Activated naive CD8-positive, alpha-beta T cell treated with anti-CD3 and anti-CD28 coated beads, Interleukin-2, amount 10 ng/mL, durations not matched to agents 7 days and 5 days (primary cell): ENCODE measurements at regions of chr15 and their contacts with region 1.

Region 1: DNA sequence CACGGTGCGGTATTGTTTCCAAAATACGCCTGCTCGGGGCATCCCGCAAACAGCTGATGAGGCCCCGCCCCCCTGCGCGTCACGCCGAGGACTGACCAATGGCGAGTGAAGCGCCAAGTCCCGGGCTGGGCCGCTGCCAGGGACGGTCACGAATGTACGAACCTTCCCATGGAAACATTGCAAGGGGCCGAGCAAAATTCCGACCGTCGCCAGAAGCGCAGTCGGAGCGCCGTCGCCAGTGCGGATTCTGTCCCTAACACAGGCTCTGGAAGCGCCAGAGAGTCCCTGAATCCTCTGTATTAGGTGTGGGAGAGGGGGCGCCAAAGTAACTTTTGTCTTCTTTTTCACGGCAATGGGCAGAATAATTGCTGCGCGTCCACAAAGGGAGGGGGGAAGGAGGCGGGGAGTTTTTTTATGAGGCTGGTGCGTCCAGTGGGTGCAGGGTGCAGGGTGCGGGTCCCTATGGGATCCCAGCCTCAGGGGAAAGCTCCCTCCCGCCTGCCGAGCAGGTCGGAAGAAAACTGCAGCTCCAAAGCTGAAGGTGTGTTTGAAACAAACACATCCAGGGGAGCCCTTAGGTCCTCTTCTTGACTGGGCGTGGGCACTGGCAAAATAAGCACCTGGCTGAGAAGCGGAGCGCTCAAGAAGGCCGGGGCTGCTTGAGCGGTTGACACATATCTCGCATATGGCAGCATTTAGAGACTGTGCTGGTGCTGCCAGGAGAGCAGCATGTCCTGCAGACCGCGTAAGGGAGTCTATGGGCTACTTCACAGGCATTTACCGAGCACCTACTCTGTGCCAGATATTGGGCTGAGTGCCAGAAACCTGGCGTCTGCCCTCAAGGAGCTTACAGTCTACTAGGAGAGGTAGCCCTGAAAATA is at the start of gene BMF:
- DNase-seq: peak; percentile 97
- ATAC-seq: peak; percentile 79
- H3K4me3 Mint-ChIP-seq: peak within 1 kb of the TSS; percentile 91
- H3K27ac Mint-ChIP-seq: peak within 1 kb of the TSS; percentile 81
- H3K4me1 Mint-ChIP-seq: peaks cover 45% of the 10 kb centered on the region
- H3K27me3 Mint-ChIP-seq: peaks cover 24% of the 10 kb centered on the region
- total RNA-seq, gene BMF: 20.6 to 24.6 TPM

Region 2: DNA sequence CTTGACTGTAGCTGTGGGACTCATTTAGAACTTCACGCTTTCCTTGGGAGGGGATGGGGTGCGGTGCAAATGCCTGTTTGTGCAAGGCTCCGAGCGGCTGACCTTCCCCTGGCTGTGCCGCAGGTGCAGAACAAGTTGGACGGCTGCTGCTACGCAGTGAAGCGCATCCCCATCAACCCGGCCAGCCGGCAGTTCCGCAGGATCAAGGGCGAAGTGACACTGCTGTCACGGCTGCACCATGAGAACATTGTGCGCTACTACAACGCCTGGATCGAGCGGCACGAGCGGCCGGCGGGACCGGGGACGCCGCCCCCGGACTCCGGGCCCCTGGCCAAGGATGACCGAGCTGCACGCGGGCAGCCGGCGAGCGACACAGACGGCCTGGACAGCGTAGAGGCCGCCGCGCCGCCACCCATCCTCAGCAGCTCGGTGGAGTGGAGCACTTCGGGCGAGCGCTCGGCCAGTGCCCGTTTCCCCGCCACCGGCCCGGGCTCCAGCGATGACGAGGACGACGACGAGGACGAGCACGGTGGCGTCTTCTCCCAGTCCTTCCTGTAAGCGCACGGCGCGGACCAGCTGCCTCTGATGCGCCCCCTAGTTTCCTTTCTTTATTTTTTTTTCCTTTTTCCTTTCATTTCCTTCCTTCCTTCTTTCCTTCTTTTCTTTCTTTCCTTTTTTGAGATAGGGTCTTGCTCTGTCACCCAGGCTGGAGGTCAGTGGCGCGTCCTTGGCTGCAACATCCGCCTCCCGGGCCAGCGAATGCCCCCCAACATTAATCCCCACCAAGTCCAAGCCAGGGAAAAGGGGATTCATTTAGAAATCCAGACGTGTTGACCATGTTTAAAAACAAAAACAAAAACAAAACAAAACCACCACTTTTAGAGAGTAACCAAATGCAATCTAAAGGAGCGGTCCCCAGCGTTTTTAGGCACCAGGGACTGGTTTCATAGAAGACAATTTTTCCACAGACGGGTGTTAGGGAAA is 132.5 kb before region 1 on chr15:
- POLR2A ChIA-PET with region 1: no interaction called
- DNase-seq: no peak
- ATAC-seq: no peak
- H3K4me3 Mint-ChIP-seq: no peak overlapping the region
- H3K27ac Mint-ChIP-seq: no peak overlapping the region
- H3K4me1 Mint-ChIP-seq: no peaks in the 10 kb centered on the region
- H3K27me3 Mint-ChIP-seq: no peaks in the 10 kb centered on the region

Region 3: GRCh38 chr15:40047413-40048210 is 61.5 kb before region 1 on chr15:
- POLR2A ChIA-PET with region 1: interaction called, 28 read pairs
- DNase-seq: peak; percentile 55
- ATAC-seq: peak; percentile 76
- H3K4me3 Mint-ChIP-seq: peak overlapping the region; percentile 65
- H3K27ac Mint-ChIP-seq: peak overlapping the region; percentile 92
- H3K4me1 Mint-ChIP-seq: peaks cover 46% of the 10 kb centered on the region
- H3K27me3 Mint-ChIP-seq: no peaks in the 10 kb centered on the region